Activated naive CD4-positive, alpha-beta T cell treated with anti-CD3 and anti-CD28 coated beads, Interleukin-2, amount 10 ng/mL, durations not matched to agents 7 days and 5 days (primary cell): ENCODE measurements at regions of chr15 and their contacts with region 1.

Region 1: DNA sequence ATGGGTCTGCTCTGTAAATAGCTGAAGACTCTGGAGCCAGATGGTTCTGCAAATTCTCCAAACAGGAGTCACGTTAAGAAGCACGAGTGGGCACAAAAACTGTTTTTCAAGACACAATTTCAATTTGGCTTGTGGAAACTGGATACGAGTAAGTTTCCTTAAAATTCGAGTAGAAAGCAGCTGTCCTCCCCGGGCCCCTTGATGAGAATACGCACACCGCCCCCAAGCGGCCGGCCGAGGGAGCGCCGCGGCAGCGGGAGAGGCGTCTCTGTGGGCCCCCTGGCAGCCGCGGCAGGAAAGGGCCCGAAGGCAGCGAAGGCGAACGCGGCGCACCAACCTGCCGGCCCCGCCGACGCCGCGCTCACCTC is 778 bp upstream of the THBS1 start:
- DNase-seq: peak; percentile 90
- H3K4me3 Mint-ChIP-seq: peak overlapping the region; percentile 50
- H3K27ac Mint-ChIP-seq: no peak overlapping the region
- H3K4me1 Mint-ChIP-seq: peaks cover 16% of the 10 kb centered on the region
- H3K27me3 Mint-ChIP-seq: peaks cover 84% of the 10 kb centered on the region

Region 2: GRCh38 chr15:38707802-38708671 is 872.1 kb before region 1 on chr15:
- CTCF ChIA-PET with region 1: interaction called, 13 read pairs
- DNase-seq: peak; percentile 54
- H3K4me3 Mint-ChIP-seq: no peak overlapping the region
- H3K27ac Mint-ChIP-seq: no peak overlapping the region
- H3K4me1 Mint-ChIP-seq: peaks cover 20% of the 10 kb centered on the region
- H3K27me3 Mint-ChIP-seq: peaks cover 20% of the 10 kb centered on the region

Region 3: DNA sequence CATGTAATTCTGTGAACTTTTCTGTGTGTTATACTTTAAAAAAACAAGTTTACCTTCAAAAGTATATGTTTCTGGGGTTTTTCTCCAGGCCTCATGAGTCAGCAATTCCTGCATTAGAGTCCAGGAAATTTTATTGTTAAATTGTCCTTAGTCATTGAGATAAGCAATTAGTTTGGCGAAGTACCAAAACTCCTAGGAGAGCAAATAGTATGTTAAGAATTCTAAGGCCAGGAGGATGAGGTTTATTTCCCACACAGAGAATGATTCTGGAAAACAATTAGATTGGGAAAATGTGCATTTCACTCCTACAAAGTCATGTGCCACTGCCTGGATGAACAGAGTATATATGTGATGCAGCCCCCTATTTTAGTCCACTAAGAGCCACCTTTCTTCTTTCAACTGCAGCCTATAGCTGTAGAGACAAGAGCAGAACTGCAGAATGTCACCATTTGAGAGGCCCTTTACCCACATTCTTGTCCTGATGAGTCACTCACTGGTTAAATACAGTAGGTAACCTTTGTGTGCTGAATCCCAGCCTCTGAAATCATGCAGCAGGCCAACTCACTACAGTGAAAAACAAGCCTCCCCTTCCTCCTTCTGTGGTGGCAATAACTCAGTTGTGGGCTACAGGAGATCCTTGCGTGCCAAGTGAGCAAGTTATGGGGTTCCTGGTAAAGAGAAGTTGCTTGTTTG is 452.0 kb before region 1 on chr15:
- CTCF ChIA-PET with region 1: interaction called, 11 read pairs
- DNase-seq: no peak
- H3K4me3 Mint-ChIP-seq: no peak overlapping the region
- H3K27ac Mint-ChIP-seq: no peak overlapping the region
- H3K4me1 Mint-ChIP-seq: no peaks in the 10 kb centered on the region
- H3K27me3 Mint-ChIP-seq: peaks cover 6% of the 10 kb centered on the region

Region 4: GRCh38 chr15:39429898-39430357 is 150.2 kb before region 1 on chr15:
- CTCF ChIA-PET with region 1: no interaction called
- DNase-seq: no peak
- H3K4me3 Mint-ChIP-seq: no peak overlapping the region
- H3K27ac Mint-ChIP-seq: no peak overlapping the region
- H3K4me1 Mint-ChIP-seq: peaks cover 36% of the 10 kb centered on the region
- H3K27me3 Mint-ChIP-seq: peaks cover 49% of the 10 kb centered on the region

Region 5: GRCh38 chr15:39530466-39531342 is 49.4 kb before region 1 on chr15:
- CTCF ChIA-PET with region 1: no interaction called
- DNase-seq: no peak
- H3K4me3 Mint-ChIP-seq: no peak overlapping the region
- H3K27ac Mint-ChIP-seq: no peak overlapping the region
- H3K4me1 Mint-ChIP-seq: no peaks in the 10 kb centered on the region
- H3K27me3 Mint-ChIP-seq: peaks cover 32% of the 10 kb centered on the region

Region 6: DNA sequence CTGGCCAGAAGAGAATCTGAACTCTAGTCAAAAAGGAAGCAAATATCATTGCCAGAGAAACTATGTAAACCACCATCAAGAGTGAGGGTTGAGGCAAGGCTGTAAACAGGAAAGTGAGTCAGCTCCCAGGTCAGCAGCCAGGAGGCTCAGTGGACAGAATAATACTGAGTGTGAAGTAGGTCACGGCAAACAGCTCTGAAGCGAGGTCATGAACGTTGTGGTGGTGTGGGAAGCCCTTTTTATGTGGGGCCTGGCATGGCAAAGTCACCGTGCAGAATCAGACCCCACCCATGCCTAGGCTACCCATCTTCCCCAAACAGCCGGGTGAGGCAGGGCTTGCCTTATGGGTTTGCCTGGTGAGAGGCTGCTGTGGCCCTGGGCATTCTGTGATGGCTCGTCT is 44.7 kb after region 1 on chr15:
- CTCF ChIA-PET with region 1: interaction called, 22 read pairs
- DNase-seq: peak; percentile 79
- H3K4me3 Mint-ChIP-seq: peak overlapping the region; percentile 24
- H3K27ac Mint-ChIP-seq: peak overlapping the region; percentile 98
- H3K4me1 Mint-ChIP-seq: peaks cover 80% of the 10 kb centered on the region
- H3K27me3 Mint-ChIP-seq: peaks cover 2% of the 10 kb centered on the region

Region 7: GRCh38 chr15:39692356-39693327 is 112.5 kb after region 1 on chr15:
- CTCF ChIA-PET with region 1: no interaction called
- DNase-seq: no peak
- H3K4me3 Mint-ChIP-seq: no peak overlapping the region
- H3K27ac Mint-ChIP-seq: no peak overlapping the region
- H3K4me1 Mint-ChIP-seq: no peaks in the 10 kb centered on the region
- H3K27me3 Mint-ChIP-seq: peaks cover 6% of the 10 kb centered on the region